ENCODE measurements at regions of chrX and their contacts with region 1.

Region 1: DNA sequence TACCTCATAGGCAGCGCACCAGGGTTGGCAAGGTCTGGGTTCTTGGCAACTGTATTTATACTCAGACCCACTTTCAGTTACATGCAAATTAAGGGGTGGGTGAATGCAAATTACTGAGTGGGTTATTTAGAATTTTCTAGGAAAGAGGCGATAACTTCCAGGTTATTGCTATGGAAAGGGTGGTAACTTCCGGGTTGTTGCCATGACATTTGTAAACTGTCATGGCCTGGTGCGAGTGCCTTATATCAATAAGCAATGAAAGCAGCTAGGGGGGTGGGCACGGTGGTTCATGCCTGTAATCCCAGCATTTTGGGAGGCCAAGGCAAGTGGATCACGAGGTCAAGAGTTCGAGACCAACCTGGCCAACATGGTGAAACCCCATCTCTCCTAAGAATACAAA is 57.5 kb upstream of the SLC7A3 start:
- DNase-seq: peak in 2 of 7 donors; percentile 12 to 46
- H3K4me3 ChIP-seq: no peak overlapping the region
- H3K27ac ChIP-seq: no peak overlapping the region
- H3K4me1 ChIP-seq: no peaks in the 10 kb centered on the region
- H3K27me3 ChIP-seq: no peaks in the 10 kb centered on the region
- CTCF ChIP-seq: no peak
- POLR2A ChIP-seq: no peak

Region 2: DNA sequence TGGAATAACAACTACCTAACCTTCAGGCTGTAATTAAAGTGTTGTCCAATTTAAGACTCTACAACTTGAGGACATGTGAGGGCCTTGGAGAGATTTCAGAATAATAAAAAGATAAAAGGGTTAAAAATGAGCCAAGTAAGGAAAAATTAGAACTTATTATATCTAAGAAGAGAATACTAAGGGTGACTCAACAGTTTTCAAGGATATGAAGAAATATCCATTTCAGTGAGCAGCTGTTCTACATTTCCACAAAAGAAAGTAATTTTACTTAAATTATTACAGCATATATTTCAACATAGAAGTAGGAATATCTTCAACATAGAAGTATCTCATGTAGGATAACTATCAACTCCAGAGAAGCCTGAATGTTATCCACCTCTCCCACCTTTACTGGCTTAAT is 68.4 kb after region 1 on chrX:
- intact Hi-C with region 1: no loop called
- DNase-seq: no peak
- H3K4me3 ChIP-seq: no peak overlapping the region
- H3K27ac ChIP-seq: peak overlapping the region in 1 of 5 donors; percentile 37
- H3K4me1 ChIP-seq: no peaks in the 10 kb centered on the region
- H3K27me3 ChIP-seq: peaks cover 3% of the 10 kb centered on the region
- CTCF ChIP-seq: no peak
- POLR2A ChIP-seq: no peak

Region 3: DNA sequence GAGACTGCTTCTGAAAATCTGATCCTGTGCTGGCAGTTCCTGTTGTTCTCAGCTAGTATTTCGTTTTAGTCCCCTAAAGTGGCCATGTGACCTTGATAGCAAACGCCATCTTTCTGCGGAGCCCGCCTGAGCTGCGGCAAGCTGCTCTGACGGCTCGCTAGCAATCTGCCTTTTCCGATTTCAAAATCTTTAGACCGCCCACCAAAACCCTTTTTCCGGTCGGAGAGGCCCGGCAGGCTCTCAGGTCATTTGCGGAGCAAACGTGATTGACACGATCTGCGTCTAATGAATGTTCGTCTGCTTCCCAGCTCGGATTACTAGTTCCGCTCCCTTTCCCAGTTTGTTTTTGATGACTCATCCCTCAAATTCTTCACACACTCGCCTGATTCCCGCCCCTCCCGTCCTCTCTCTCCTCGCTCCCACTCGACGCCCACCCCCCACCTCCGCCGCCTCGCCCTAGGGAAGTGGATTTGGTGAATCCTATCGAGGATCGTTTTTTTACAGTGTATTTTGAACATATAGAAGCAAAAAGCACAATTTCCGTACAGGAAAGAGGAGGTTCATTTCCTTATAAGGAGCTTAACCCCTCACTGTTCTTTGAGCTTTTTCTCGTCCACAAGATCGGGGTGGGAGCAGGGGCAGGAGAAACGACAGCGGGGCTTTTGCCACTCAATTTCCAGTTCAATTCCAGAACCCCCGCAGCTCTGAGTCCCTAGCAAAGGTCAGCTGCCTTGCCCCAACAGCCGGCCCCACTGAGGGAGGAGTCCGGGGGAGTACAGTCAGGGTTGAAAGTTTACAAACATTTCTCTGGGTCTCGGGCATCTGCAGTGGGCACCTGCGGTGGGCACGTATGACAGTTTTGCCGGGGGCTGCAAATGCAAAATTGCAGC is 193.7 kb after region 1 on chrX:
- intact Hi-C with region 1: loop called in 1 of 2 experiments (anchors 10 kb)
- DNase-seq: peak; percentile 84 to 96 (median 92)
- H3K4me3 ChIP-seq: peak overlapping the region in 2 of 4 donors; percentile 19 to 35
- H3K27ac ChIP-seq: peak overlapping the region; percentile 39 to 86 (median 83)
- H3K4me1 ChIP-seq: peaks cover 9% of the 10 kb centered on the region in 2 donors
- H3K27me3 ChIP-seq: no peaks in the 10 kb centered on the region
- CTCF ChIP-seq: no peak
- POLR2A ChIP-seq: peak; percentile 55 to 94

Region 4: GRCh38 chrX:71236836-71237235 is 248.4 kb after region 1 on chrX:
- intact Hi-C with region 1: no loop called
- DNase-seq: no peak
- H3K4me3 ChIP-seq: no peak overlapping the region
- H3K27ac ChIP-seq: no peak overlapping the region
- H3K4me1 ChIP-seq: no peaks in the 10 kb centered on the region
- H3K27me3 ChIP-seq: no peaks in the 10 kb centered on the region
- CTCF ChIP-seq: no peak
- POLR2A ChIP-seq: no peak